Left lung (tissue), 14 donors: ENCODE measurements at regions of chr6 and their contacts with region 1.

Region 1: GRCh38 chr6:33248925-33249731 is 22.5 kb downstream of the VPS52 start:
- DNase-seq: peak; percentile 92 to 98 (median 98)
- ATAC-seq: peak; percentile 95
- H3K4me3 ChIP-seq: peak overlapping the region; percentile 43 to 50
- H3K27ac ChIP-seq: peak overlapping the region; percentile 91 to 92
- H3K4me1 ChIP-seq: peaks cover 11 to 31% of the 10 kb centered on the region in 2 donors
- H3K27me3 ChIP-seq: no peaks in the 10 kb centered on the region
- CTCF ChIP-seq: no peak

Region 2: DNA sequence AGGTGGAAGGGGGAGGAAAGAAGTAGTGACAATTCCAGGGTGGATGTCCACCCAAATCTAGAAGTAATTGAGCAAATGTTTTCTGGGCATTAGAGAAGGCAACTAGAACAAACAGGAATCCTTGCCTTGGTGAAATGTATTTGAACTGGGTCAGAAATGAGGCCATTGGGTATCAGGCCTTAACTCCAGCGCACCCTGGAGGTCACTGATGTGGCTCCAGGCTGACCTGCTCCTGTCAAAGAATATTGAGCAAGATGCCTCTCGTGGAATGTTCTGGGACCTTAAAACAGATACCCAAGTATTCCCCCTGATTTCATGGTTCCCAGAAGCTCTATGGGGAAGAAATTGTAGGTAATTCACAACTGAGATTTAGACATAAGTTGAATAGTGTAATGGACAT is 166.4 kb before region 1 on chr6:
- intact Hi-C with region 1: no loop called
- DNase-seq: peak in 1 of 4 donors; percentile 35
- ATAC-seq: peak; percentile 78
- H3K4me3 ChIP-seq: no peak overlapping the region
- H3K27ac ChIP-seq: no peak overlapping the region
- H3K4me1 ChIP-seq: peaks cover 0 to 25% of the 10 kb centered on the region in 2 donors
- H3K27me3 ChIP-seq: no peaks in the 10 kb centered on the region
- CTCF ChIP-seq: peak in 1 of 2 donors; percentile 37

Region 3: DNA sequence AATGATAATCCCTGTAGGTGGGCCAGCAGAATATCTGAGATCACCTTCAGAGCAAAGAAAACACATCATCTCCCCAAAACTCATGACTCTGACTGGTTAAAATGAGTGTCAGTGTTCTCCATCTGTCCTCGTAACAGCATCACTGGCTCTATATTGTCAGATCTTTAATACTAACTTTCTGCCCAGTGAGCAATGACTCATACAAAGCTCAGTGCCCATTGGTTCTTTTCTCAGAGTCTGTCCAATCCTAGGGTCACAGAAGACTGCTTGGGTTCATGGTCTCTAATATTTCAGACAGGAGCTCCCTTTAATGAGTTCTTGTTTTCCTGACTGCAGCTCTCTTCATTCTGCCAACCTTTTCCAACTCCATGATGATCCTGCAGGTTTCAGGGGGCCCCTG is 137.0 kb before region 1 on chr6:
- intact Hi-C with region 1: loop called in 1 of 2 experiments (anchors 10 kb)
- DNase-seq: peak in 2 of 4 donors; percentile 30 to 54
- ATAC-seq: peak; percentile 98
- H3K4me3 ChIP-seq: no peak overlapping the region
- H3K27ac ChIP-seq: no peak overlapping the region
- H3K4me1 ChIP-seq: peaks cover 0 to 9% of the 10 kb centered on the region in 2 donors
- H3K27me3 ChIP-seq: peaks cover 11 to 54% of the 10 kb centered on the region in 2 donors
- CTCF ChIP-seq: no peak

Region 4: DNA sequence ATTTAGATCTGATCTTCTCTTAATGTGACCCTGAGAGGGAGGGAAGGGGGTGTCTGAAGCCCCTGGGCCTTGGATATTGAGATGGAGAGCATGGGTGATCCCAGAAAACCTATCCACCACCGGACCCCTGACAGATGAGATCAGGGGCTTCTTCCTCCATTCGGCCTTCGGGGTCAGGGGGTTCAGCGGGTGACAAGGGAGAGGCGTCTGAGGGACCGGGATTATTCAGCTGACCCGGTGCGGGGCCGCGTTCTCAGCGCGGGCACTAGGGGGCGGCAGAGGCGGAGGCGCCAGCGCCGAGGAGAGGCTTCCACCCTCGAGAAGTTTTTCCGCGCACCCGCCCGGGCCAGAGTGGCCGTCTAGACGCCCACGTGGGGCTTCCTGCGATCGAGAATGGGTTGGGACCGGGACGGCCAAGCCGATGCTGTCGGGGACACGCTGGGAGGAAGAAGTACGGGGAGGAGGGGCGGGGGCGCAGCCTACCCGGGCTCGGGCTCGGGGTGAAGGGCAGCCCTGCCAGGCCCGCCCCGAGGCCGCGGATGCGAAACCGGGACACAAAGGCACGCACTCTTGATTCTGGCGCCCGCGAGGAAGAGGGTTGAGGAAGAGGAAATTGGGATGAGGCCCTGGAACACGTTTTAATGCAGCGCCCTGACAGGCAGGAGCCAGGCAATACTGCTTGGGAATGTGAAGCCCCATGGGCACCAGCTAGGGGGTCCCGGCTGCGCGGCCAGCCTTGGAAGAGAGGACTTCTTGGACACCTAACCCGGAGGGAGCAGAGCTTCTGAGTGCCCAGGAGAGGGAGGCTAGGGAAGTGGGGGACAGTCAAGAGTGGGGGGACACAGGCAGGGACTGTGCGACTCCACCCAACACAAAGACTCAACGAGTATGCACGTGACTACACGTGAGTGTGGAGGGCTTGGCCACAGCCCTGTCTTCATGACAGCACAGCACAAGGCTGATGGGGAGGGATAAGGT is 87.5 kb before region 1 on chr6:
- intact Hi-C with region 1: loop called in 1 of 2 experiments (anchors 10 kb)
- DNase-seq: peak; percentile 43 to 98 (median 74)
- ATAC-seq: peak; percentile 97
- H3K4me3 ChIP-seq: peak overlapping the region; percentile 32 to 48
- H3K27ac ChIP-seq: peak overlapping the region; percentile 3 to 44
- H3K4me1 ChIP-seq: peaks cover 6 to 12% of the 10 kb centered on the region in 2 donors
- H3K27me3 ChIP-seq: no peaks in the 10 kb centered on the region
- CTCF ChIP-seq: peak; percentile 87 to 93

Region 5: DNA sequence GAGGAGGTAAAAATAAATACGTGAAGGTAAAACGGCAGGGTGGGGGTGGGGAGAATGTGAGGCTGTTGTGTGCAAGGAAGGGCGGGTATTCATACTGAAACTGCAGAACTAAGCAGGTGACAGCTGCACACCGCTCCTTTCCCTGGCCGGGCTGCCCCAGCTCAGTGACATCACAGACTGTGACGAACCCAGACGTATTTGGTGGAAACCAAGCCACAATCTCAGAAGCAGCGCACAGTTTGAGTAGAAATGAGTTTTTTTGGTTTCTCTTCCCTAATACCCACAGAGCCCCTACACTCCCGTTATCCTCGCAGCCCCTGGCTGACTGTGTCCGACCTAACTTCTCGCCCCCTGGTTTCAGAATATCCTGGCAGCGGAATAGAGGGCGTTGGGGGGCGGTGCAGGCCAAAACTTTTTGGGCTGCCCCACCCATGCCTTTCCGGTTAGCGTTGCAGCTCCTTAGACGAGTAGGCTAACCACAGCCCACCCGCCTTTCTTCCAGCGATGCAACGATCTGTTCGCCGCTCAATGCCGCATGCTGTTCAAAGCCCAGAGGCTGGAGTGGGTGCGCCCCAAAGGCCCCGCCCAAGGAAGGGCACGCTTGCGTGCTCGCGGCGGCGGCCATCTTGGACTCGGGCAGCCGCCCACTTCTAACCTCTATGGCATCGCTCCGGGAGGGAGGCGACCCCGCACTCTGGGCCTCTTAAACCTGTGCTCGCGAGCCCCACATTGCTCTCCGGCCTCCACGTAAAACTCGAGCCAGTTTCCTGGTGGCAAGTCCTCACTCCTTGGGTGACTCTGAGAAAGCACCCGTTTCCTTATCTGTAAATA is 321.9 kb after region 1 on chr6:
- intact Hi-C with region 1: no loop called
- DNase-seq: peak; percentile 67 to 97 (median 84)
- ATAC-seq: peak; percentile 97
- H3K4me3 ChIP-seq: peak overlapping the region; percentile 53 to 64
- H3K27ac ChIP-seq: peak overlapping the region; percentile 79 to 85
- H3K4me1 ChIP-seq: peaks cover 5 to 18% of the 10 kb centered on the region in 2 donors
- H3K27me3 ChIP-seq: no peaks in the 10 kb centered on the region
- CTCF ChIP-seq: no peak